A549 (cell line): ENCODE measurements at regions of chr6 and their contacts with region 1.

Region 1: GRCh38 chr6:28335564-28336283 is at the start of gene ZSCAN31:
- DNase-seq: peak; percentile 81 to 94
- ATAC-seq: peak; percentile 97 to 99
- H3K4me3 ChIP-seq: peak within 1 kb of the TSS; percentile 77
- H3K27ac ChIP-seq: peak within 1 kb of the TSS; percentile 87 to 97
- H3K4me1 ChIP-seq: peaks cover 6% of the 10 kb centered on the region; the same call in 1 of the 3 replicates
- CTCF ChIP-seq: no peak
- EP300 ChIP-seq: no peak
- POLR2A ChIP-seq: peak; percentile 49
- RAD21 ChIP-seq: no peak
- polyA plus RNA-seq, gene ZSCAN31: 4.0 and 4.8 TPM in 2 replicates

Region 2: GRCh38 chr6:28080631-28081485 is 254.9 kb before region 1 on chr6:
- CTCF ChIA-PET with region 1: no interaction called
- POLR2A ChIA-PET with region 1: interaction called, 10 read pairs
- DNase-seq: peak; percentile 77 to 97
- ATAC-seq: peak; percentile 95
- H3K4me3 ChIP-seq: peak overlapping the region; percentile 52
- H3K27ac ChIP-seq: peak overlapping the region; percentile 87 to 93
- H3K4me1 ChIP-seq: no peaks in the 10 kb centered on the region
- CTCF ChIP-seq: no peak
- EP300 ChIP-seq: no peak
- POLR2A ChIP-seq: no peak
- RAD21 ChIP-seq: no peak

Region 3: GRCh38 chr6:28141500-28142329 is 194.0 kb before region 1 on chr6 and contains the start of gene ZKSCAN8:
- CTCF ChIA-PET with region 1: no interaction called
- POLR2A ChIA-PET with region 1: interaction called, 11 read pairs
- DNase-seq: peak; percentile 81 to 93
- ATAC-seq: peak; percentile 96
- H3K4me3 ChIP-seq: peak within 1 kb of the TSS; percentile 98
- H3K27ac ChIP-seq: peak within 1 kb of the TSS; percentile 85 to 94
- H3K4me1 ChIP-seq: peaks cover 13% of the 10 kb centered on the region
- CTCF ChIP-seq: no peak
- EP300 ChIP-seq: no peak
- POLR2A ChIP-seq: peak; percentile 54
- RAD21 ChIP-seq: no peak
- polyA plus RNA-seq, gene ZKSCAN8: 8.9 and 16.2 TPM in 2 replicates

Region 4: GRCh38 chr6:28266962-28267694 is 68.6 kb before region 1 on chr6 and contains the start of gene ZSCAN26:
- CTCF ChIA-PET with region 1: no interaction called
- POLR2A ChIA-PET with region 1: interaction called, 14 read pairs
- DNase-seq: peak; percentile 67 to 91
- ATAC-seq: peak; percentile 99
- H3K4me3 ChIP-seq: peak within 1 kb of the TSS; percentile 68
- H3K27ac ChIP-seq: peak within 1 kb of the TSS; percentile 93 to 96
- H3K4me1 ChIP-seq: peaks cover 25% of the 10 kb centered on the region
- CTCF ChIP-seq: no peak
- EP300 ChIP-seq: no peak
- POLR2A ChIP-seq: peak; percentile 33
- RAD21 ChIP-seq: no peak
- polyA plus RNA-seq, gene ZSCAN26: 10.1 and 11.2 TPM in 2 replicates

Region 5: DNA sequence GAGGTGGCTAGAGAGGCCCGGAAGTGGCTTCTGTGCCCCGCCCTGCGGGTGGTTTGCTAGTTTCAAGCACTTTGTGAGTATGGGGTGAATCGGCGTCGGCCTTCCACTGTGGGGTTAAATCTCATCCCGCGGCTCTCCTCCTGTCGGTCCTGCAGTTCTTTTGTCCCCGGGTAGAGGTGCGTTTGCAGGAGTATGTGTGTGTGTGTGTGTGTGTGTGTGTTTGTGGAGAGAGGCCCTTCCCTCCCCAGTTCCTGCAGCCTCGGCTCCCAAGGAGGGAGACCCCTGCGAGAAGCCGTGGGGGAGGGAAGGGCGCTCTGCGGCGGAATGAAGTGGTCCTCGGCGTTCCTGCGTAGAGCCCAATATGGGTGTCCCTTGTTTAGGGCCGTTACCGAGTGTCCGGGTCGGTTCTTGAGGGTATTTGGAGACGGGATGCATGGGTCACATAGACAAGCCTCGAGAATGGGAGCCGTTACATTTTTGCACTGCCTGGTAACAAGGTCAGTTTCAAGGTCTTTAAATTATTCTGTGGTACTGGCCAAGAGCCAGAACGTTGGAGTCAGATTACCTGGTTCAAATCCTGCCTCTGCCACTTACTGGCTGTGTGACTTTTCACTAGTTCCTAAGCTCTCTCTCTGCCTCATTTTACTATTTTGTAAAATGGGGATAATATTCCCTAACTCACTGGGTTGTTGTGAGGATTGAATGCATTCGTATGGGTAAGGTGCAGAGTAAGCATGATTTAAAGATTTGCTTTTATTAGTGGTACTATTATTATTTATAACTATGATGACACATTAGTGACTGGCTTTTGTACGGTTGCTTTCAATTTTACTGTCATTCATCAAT is 14.4 kb after region 1 on chr6 and contains the start of gene ZKSCAN3:
- CTCF ChIA-PET with region 1: interaction called, 5 read pairs
- POLR2A ChIA-PET with region 1: interaction called, 12 read pairs
- DNase-seq: peak; percentile 70 to 75
- ATAC-seq: peak; percentile 98 to 99
- H3K4me3 ChIP-seq: peak within 1 kb of the TSS; percentile 75
- H3K27ac ChIP-seq: peak within 1 kb of the TSS; percentile 78 to 90
- H3K4me1 ChIP-seq: 0 out of 3 replicates have a peak, but pooled peaks cover 13% of the 10 kb centered on the region
- CTCF ChIP-seq: no peak
- EP300 ChIP-seq: no peak
- POLR2A ChIP-seq: peak; percentile 68
- RAD21 ChIP-seq: no peak
- polyA plus RNA-seq, gene ZKSCAN3: 2.7 and 3.5 TPM in 2 replicates

Region 6: DNA sequence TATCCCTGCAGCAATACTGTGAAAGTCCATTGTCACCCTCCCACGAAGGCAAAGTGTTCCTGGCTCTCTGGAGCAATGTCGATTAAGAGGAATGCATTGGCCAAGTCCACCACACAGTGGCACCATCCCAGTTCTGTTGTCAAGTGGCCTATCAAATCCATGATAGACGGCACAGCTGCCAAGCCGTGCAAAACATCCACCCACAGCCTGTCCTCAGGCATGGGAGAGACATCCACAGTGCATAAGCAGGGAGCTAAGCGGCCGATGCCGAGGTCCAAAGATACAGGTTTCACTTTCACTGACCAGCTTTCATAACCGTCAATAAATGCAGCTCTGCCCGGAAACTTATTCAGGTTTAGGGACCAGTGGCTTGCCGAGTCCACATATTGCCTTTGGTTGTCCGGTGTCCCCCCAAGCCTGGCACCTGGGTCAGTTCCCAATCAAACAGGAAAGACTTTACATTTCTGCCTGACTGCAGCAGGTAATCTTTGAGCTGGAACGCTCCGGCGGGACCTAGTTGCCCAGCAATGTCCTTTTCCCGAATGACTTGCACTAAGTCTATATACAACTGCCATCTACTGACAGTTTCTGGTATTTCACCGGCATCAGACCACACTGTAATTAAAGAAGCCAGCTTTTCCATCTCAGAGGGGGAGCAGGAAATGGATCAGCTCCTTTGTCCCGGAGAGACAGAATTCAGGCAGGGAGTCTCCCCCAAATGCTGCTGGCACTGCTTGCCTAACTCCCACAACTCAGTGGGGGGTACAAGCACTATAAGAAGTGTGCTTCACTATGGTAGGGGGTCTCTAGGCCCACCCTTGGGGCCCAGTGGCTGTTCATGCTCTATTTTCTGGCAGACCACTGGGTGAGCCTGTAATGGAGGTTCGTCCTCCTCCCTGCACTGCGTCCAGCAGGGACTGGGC is 20.3 kb after region 1 on chr6:
- CTCF ChIA-PET with region 1: interaction called, 5 read pairs
- POLR2A ChIA-PET with region 1: interaction called, 12 read pairs
- DNase-seq: peak; percentile 48 to 81
- ATAC-seq: peak; percentile 93 to 96
- H3K4me3 ChIP-seq: peak overlapping the region; percentile 54
- H3K27ac ChIP-seq: peak overlapping the region; percentile 59 to 87; a peak in 5 of 6 replicates
- H3K4me1 ChIP-seq: peaks cover 19% of the 10 kb centered on the region
- CTCF ChIP-seq: peak; percentile 58
- EP300 ChIP-seq: no peak
- POLR2A ChIP-seq: no peak
- RAD21 ChIP-seq: peak; percentile 61 to 68